Activated B cell treated with CpG ODN at 0.5 μM for 24 hours (primary cell): ENCODE measurements at regions of chr12 and their contacts with region 1.

Region 1: GRCh38 chr12:76083904-76084862 is at the start of gene NAP1L1:
- DNase-seq: peak; percentile 96
- ATAC-seq: peak; percentile 81
- H3K4me3 Mint-ChIP-seq: peak within 1 kb of the TSS; percentile 99
- H3K27ac Mint-ChIP-seq: peak within 1 kb of the TSS; percentile 100
- H3K4me1 Mint-ChIP-seq: peaks cover 60% of the 10 kb centered on the region
- H3K27me3 Mint-ChIP-seq: no peaks in the 10 kb centered on the region
- CTCF ChIP-seq: no peak
- total RNA-seq, gene NAP1L1: 1,180 and 1,185 TPM in 2 replicates

Region 2: DNA sequence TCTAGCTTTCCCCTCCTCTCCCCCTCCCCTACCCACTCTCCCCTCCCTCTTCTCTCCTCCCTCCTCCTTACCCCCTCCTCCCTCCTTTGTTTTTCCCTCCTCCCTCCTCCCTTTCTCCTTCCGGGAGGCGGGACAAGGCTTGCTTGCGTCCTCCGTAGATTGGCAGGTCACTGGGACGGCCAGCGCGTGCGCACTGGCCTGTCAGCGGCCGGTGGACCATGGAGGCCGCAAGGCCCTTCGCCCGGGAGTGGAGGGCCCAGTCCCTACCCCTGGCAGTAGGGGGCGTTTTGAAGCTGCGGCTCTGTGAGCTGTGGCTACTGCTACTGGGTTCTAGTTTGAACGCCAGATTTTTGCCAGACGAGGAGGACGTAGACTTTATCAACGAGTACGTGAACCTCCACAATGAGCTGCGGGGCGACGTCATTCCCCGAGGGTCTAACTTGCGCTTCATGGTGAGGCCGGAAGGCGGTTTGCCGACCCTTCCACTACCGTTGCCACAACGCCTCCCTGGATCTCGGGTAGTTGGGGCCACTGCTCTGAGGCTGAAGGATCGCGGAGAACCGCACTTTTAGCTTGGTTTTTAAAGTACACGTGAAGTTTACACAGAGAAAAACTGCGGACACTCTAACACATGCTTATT is 693.2 kb before region 1 on chr12 and contains the start of gene GLIPR1L2:
- CTCF ChIA-PET with region 1: no interaction called
- POLR2A ChIA-PET with region 1: no interaction called
- intact Hi-C with region 1: loop called (anchors 1 kb)
- DNase-seq: peak; percentile 86
- ATAC-seq: peak; percentile 95
- H3K4me3 Mint-ChIP-seq: peak within 1 kb of the TSS; percentile 94
- H3K27ac Mint-ChIP-seq: peak within 1 kb of the TSS; percentile 97
- H3K4me1 Mint-ChIP-seq: peaks cover 38% of the 10 kb centered on the region
- H3K27me3 Mint-ChIP-seq: no peaks in the 10 kb centered on the region
- CTCF ChIP-seq: peak; percentile 68
- total RNA-seq, gene GLIPR1L2: 0.20 TPM in 1 of 2 replicates, not detected in the other

Region 3: DNA sequence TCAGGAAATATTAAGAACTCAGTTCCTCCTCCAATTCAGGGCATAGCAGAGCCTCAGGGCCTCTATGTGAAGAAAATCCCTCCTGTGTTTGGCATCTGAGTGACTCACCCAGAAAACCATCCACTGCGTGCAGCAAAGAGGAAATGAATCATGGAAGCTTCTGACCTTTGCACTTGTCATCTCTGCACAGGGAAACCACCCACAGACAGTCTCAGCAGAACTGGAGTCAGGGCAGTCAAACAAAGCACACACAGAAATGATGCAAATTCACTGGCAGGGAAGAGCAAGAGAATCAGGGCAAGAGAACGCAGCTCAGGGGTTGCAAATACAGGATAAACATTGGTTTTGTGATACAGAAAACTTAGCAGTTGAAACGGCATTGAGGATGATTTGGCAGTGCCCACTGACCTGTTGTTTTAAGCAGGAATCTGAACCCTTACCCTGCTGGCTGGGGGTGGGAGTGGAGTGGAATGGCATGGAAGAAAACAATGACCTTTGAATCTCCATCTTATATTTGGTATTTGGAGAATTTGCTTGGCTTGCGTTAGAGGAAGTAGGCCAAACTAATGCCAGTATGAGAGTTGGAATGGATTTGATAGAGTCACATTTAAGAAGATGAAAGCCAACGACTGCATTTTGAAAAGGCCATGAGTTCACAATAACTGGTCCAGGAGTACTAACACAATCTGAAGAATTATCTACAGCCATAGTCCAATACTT is 106.1 kb before region 1 on chr12:
- CTCF ChIA-PET with region 1: no interaction called
- POLR2A ChIA-PET with region 1: no interaction called
- intact Hi-C with region 1: loop called (anchors 1 kb)
- DNase-seq: peak; percentile 23
- ATAC-seq: peak; percentile 93
- H3K4me3 Mint-ChIP-seq: peak overlapping the region; percentile 11
- H3K27ac Mint-ChIP-seq: peak overlapping the region; percentile 65
- H3K4me1 Mint-ChIP-seq: peaks cover 35% of the 10 kb centered on the region
- H3K27me3 Mint-ChIP-seq: no peaks in the 10 kb centered on the region
- CTCF ChIP-seq: no peak

Region 4: GRCh38 chr12:76158518-76159321 is 74.5 kb after region 1 on chr12:
- CTCF ChIA-PET with region 1: interaction called, 8 read pairs
- POLR2A ChIA-PET with region 1: no interaction called
- intact Hi-C with region 1: loop called (anchors 1 kb)
- DNase-seq: peak; percentile 33
- ATAC-seq: peak; percentile 99
- H3K4me3 Mint-ChIP-seq: peak overlapping the region; percentile 82
- H3K27ac Mint-ChIP-seq: peak overlapping the region; percentile 88
- H3K4me1 Mint-ChIP-seq: peaks cover 20% of the 10 kb centered on the region
- H3K27me3 Mint-ChIP-seq: no peaks in the 10 kb centered on the region
- CTCF ChIP-seq: no peak

Region 5: DNA sequence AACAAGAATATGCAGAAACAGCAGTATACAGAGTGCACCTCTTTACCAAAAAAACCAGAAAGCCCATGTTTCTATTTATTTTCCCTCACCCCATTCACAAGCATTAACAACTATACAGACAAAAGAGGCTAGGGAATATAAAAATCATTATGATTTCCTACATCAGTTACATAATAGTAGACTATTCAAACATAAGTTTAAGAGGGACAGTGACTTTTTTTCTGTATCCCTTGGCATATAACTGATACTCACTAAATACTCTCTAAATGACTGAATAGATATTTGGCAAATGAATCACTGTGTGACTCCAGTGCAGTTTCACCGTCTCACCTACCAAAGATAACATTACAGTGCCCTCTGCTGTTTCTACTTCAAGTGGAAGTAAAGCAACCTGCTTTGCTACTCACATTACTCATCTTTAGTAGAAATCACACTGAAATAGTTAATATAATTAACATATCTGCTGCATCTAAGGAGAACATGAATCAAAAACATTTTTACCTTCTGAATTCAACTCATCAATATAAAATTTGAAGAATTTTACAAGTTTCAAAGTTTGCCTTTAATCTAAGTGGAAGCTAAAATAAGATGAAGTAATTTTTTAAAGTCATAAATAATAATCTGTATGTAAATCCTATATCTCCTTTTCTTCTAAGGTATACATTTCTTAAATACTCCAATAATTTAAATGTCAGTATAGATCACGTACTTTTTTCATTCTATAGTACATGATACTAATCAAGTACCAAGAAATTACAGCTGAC is 371.6 kb after region 1 on chr12:
- CTCF ChIA-PET with region 1: no interaction called
- POLR2A ChIA-PET with region 1: no interaction called
- intact Hi-C with region 1: loop called (anchors 1 kb)
- DNase-seq: no peak
- ATAC-seq: peak; percentile 62
- H3K4me3 Mint-ChIP-seq: no peak overlapping the region
- H3K27ac Mint-ChIP-seq: no peak overlapping the region
- H3K4me1 Mint-ChIP-seq: peaks cover 9% of the 10 kb centered on the region
- H3K27me3 Mint-ChIP-seq: no peaks in the 10 kb centered on the region
- CTCF ChIP-seq: no peak

Region 6: DNA sequence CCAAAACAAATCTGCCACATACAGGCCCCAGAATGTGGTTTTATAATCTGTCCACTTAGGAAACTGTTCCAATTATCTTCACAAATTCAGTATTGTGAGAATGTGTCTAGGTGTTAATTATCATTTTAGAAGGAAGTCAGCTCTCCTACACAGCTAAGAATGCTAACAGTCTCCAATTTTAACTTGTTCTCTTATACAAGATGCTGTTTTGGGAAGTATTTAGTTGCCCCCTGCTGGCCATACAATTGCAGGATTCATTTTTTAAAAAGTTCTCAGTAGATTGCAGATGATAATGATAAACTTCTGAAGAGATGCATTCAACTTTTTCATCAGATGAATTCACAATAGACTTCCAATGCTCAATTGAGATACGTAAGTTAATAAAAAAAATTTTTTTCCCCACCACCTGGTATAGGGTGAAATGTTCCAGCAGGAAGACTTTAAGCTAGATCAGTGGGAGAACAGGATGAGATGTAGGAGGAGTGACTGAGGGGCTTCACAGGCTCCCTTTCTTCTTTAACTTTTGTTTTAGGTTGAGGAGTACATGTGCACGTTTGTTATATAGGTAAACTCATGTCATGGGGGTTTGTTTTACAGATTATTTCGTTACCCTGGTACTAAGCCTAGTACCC is 502.7 kb after region 1 on chr12:
- CTCF ChIA-PET with region 1: interaction called, 4 read pairs
- POLR2A ChIA-PET with region 1: no interaction called
- intact Hi-C with region 1: loop called (anchors 1 kb)
- DNase-seq: no peak
- ATAC-seq: peak; percentile 58
- H3K4me3 Mint-ChIP-seq: no peak overlapping the region
- H3K27ac Mint-ChIP-seq: no peak overlapping the region
- H3K4me1 Mint-ChIP-seq: peaks cover 9% of the 10 kb centered on the region
- H3K27me3 Mint-ChIP-seq: no peaks in the 10 kb centered on the region
- CTCF ChIP-seq: peak; percentile 82

Region 7: GRCh38 chr12:77065361-77066204 is 981.4 kb after region 1 on chr12 and contains the start of gene E2F7:
- CTCF ChIA-PET with region 1: no interaction called
- POLR2A ChIA-PET with region 1: no interaction called
- intact Hi-C with region 1: loop called (anchors 10 kb)
- DNase-seq: peak; percentile 81
- ATAC-seq: peak; percentile 86
- H3K4me3 Mint-ChIP-seq: peak within 1 kb of the TSS; percentile 90
- H3K27ac Mint-ChIP-seq: no peak within 1 kb of the TSS
- H3K4me1 Mint-ChIP-seq: peaks cover 36% of the 10 kb centered on the region
- H3K27me3 Mint-ChIP-seq: peaks cover 5% of the 10 kb centered on the region
- CTCF ChIP-seq: no peak
- total RNA-seq, gene E2F7: 0.71 and 0.95 TPM in 2 replicates